Right ventricle myocardium superior (tissue), 1 donor: ENCODE measurements at regions of chr7 and their contacts with region 1.

Region 1: GRCh38 chr7:101823096-101823495 is 5.7 kb downstream of the CUX1 start:
- DNase-seq: no peak
- ATAC-seq: peak; percentile 23

Region 2: DNA sequence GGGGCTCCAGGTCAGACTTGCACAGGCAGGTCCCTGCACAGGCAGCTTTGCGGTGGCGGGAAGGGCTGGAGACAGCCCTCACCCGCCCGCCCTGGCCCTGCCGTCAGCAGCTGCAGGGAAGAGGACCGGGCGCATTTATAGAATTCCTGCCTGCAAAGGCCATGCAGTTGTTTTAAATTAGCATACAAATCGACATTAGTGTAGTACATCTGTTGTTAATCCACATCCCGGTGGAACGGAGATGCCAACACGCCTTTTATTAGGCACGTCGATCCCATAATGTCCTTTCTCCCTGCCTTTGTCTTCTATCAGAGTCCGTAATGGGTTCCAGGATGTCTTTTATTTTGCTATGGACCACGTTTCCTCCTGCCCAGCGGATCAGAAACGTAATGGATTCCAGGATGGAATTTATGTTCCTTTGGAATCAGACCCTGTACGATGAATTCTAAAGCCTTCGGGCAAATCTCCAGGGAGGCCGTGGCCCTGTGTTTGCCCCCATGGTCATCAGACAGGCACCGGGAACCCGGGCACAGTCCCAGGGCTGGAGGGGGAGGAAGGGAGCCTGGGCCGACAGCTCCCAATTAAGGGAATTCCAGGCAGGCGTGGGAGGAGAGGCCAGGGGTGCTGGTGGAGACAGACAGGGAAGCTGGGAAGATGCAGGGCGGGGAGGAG is 336.5 kb before region 1 on chr7:
- intact Hi-C with region 1: no loop called
- DNase-seq: no peak
- ATAC-seq: no peak

Region 3: GRCh38 chr7:102140952-102141370 is 317.9 kb after region 1 on chr7:
- intact Hi-C with region 1: loop called (anchors 10 kb)
- DNase-seq: no peak
- ATAC-seq: no peak